Caco-2 (cell line): ENCODE measurements at regions of chr14 and their contacts with region 1.

Region 1: DNA sequence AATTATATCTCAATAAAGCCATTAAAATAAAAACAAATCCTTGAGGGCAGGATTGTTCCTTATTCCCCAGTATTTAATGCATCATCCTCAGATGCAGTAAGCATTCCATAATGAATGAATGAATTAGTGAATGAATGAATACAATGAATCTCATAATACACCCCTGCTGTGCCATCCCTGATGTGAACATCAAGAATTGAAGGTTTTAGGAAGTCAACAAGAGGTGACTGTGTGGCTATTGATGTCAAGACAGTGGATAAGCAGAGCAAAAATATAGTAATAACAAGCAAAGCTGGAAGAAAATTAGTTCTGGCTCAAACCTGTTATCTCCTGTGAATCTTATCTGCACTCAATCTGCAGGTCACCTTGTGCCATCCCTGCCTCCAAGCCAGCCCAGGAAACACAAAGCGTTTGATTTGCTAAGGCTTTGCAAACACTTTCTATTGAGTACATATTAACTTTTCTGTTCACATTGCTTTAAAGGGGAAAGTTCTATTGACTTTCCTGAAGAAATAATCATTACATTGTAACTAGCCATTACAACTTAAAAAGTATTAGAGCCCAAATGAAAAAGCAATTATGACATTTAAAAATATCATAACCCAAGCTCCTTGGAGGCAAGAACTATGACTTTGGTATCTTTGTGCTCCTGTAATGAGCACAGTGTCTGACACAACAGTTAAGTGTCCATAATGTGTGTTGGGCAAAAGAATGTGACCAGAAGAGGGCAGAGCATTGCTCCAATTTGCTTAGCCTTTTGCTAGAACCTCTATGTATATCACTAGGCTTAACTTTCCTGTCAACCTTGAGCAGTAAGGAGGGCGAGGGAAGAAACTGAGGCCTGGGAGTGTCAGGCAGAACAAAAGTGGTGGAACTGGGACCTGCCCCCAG is 24.6 kb downstream of the SERPINA3 start:
- DNase-seq: peak; percentile 58 to 61
- H3K4me3 ChIP-seq: no peak overlapping the region
- H3K4me3 Mint-ChIP-seq: no peak overlapping the region
- H3K27ac Mint-ChIP-seq: no peak overlapping the region
- H3K4me1 ChIP-seq: peaks cover 8% of the 10 kb centered on the region; the same call in 1 of the 2 replicates
- H3K4me1 Mint-ChIP-seq: no peaks in the 10 kb centered on the region
- H3K27me3 ChIP-seq: peaks cover 1% of the 10 kb centered on the region
- H3K27me3 Mint-ChIP-seq: peaks cover 4% of the 10 kb centered on the region
- CTCF ChIP-seq: peak in 1 of 2 experiments; percentile 58

Region 2: DNA sequence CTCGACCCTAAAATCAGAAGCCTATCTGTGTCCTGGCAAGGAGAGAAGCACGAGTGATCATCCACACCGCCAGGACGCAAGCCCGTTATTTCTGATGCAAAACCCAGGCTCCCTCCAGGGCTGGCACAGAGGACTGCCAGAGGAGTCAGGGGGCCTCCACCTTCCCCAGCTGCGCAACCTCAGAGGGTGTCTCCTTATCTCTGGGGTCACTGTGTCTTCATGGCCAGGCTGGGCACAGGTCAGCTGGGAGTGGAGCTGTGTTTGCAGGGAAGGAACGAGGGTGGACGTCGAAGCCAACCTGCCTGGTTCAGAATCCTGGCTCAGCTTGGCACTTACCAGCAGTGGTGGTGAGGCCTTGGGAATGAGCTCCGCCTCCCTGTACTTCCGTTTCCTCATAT is 36.6 kb before region 1 on chr14:
- CTCF ChIA-PET with region 1: no interaction called
- POLR2A ChIA-PET with region 1: no interaction called
- intact Hi-C with region 1: loop called (anchors 1 kb)
- DNase-seq: no peak
- H3K4me3 ChIP-seq: no peak overlapping the region
- H3K4me3 Mint-ChIP-seq: peak overlapping the region; percentile 35
- H3K27ac Mint-ChIP-seq: peak overlapping the region; percentile 92
- H3K4me1 ChIP-seq: peaks cover 46% of the 10 kb centered on the region
- H3K4me1 Mint-ChIP-seq: peaks cover 30% of the 10 kb centered on the region
- H3K27me3 ChIP-seq: no peaks in the 10 kb centered on the region
- H3K27me3 Mint-ChIP-seq: no peaks in the 10 kb centered on the region
- CTCF ChIP-seq: no peak

Region 3: GRCh38 chr14:95106971-95107370 is 470.2 kb after region 1 on chr14:
- CTCF ChIA-PET with region 1: no interaction called
- POLR2A ChIA-PET with region 1: no interaction called
- intact Hi-C with region 1: no loop called
- DNase-seq: no peak
- H3K4me3 ChIP-seq: no peak overlapping the region
- H3K4me3 Mint-ChIP-seq: no peak overlapping the region
- H3K27ac Mint-ChIP-seq: no peak overlapping the region
- H3K4me1 ChIP-seq: no peaks in the 10 kb centered on the region
- H3K4me1 Mint-ChIP-seq: no peaks in the 10 kb centered on the region
- H3K27me3 ChIP-seq: no peaks in the 10 kb centered on the region
- H3K27me3 Mint-ChIP-seq: no peaks in the 10 kb centered on the region
- CTCF ChIP-seq: no peak